ENCODE measurements at regions of chr6 and their contacts with region 1.

Region 1: DNA sequence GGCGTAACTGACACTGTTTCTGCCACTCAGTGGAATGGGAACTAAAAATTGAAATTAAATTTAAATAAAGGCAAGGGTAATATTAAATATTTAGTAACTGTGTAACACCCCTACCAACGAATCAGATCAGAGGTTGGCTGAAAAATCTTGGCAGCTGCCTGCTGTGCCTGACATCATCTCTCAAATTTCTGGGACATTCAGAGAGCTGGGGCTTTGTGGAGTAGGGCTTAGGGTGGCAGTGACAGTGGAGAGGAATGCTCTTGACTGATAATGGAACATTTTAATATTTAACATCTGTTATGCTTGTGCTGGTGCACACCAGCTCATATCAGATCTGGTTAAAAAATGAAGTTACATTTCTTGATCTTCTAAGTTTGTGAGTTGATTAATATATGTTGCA is 62.2 kb downstream of the RFPL4B start:
- DNase-seq: no peak
- ATAC-seq: no peak
- H3K4me3 ChIP-seq: no peak overlapping the region
- H3K27ac ChIP-seq: no peak overlapping the region
- H3K4me1 ChIP-seq: no peaks in the 10 kb centered on the region
- H3K27me3 ChIP-seq: no peaks in the 10 kb centered on the region
- CTCF ChIP-seq: no peak

Region 2: DNA sequence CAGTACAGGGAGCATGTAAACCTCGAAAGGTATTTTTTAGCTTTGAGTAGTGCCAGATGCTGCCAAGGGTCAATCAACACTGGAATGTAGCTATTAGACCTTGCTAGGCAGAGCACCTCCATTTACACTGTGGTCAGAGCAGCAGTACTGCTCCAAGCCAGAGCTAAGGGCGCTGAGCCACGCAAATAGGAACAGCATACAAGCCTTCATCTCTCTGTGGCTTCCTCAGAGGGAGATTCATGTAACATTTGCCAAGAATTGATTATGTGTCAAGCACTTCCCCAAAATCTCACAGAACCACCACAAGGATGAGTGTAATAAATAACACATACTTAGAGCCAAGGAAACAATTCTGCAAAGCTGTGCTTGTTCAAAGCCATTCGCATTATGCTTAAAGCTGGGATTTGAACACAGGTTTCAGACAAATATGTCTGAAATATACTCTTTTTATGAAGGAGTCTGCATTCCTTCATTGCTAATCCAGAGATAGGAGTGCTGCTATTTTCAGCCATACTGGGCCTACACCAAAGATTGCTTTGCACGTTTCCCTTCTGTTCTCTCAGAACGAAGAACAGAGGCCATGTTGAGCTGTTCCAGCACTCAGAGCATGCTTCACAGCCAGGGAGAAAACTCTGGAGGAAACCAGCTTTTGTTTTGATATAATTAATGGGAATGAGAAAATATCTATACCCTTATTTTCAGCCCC is 1224.3 kb before region 1 on chr6:
- intact Hi-C with region 1: loop called in 1 of 2 experiments (anchors 5 kb)
- DNase-seq: no peak
- ATAC-seq: no peak
- H3K4me3 ChIP-seq: no peak overlapping the region
- H3K27ac ChIP-seq: no peak overlapping the region
- H3K4me1 ChIP-seq: no peaks in the 10 kb centered on the region
- H3K27me3 ChIP-seq: no peaks in the 10 kb centered on the region
- CTCF ChIP-seq: no peak